ENCODE measurements at regions of chr20 and their contacts with region 1.

Region 1: DNA sequence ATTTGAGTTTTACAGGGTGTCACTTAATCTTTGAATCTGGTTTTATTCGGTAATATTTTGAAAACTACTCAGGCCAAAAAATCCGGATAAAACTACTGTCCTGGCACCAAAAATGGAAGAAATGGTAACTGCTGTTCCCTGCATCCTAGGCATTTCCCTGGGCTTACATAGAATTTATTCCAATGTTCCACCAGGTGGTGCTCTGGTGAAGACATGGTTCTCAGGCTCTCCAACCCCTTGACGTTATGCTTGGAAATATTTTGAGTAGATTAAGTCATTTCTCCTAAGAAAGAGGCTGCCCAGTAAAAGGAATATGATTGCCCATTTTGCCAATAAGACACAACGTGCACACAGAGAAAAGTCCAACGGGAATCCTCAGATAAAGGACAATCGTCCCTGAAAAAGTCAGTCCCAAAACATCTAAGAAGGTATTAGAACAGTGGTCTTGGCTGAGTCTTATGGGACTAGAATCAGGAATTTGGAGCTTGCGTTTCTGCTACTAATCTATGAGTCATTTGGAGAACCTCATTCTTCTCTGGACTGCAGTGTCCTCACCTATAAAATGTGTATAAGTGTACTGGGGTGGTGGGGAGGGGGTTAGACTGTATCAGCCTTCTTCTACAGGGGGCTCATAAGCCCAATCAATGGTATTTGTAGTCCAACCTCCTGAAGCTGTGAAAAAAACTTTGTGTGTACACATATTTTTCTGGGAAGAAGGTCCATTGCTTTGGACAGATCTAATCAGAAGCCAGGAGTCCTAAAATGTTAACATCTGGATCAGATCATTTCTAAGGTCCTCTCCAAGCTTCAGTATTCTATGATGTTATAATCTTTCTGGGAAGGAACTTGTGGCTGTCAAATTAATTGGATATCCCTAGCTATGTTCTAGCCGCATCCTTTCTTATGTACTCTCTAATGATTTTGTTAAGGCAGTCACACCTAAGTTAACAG is 131.0 kb upstream of the BMP2 start:
- DNase-seq: no peak
- ATAC-seq: peak; percentile 73
- H3K4me3 ChIP-seq: no peak overlapping the region
- H3K27ac ChIP-seq: no peak overlapping the region
- H3K4me1 ChIP-seq: no peaks in the 10 kb centered on the region
- H3K27me3 ChIP-seq: no peaks in the 10 kb centered on the region
- CTCF ChIP-seq: peak; percentile 24 to 54 (median 25); a peak in 3 of 6 replicates
- EP300 ChIP-seq: no peak
- POLR2A ChIP-seq: no peak
- RAD21 ChIP-seq: peak; percentile 36

Region 2: DNA sequence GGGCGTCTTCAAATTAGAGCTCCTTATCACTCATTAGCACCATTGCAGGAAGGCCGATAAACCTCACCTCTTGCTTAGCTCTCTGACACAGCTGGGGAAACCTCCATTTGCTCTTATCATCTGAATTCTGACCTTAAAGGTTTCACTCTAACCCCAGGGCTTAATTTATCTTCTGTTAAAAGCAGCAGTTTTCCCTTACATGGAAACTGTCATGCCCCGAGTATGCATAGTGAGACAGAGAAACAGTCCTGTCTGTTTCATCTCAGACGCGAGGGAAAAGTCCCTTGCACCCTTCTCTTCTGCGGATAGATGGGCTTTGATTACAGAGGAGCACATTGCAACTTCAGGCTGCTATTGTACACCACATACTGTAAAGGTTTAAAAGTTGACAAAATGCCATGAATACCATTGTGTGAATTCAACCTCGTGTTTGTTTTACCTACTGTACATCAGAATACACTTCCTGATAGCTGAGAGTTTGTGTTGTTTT is 60.5 kb before region 1 on chr20:
- CTCF ChIA-PET with region 1: interaction called, 4 read pairs
- POLR2A ChIA-PET with region 1: no interaction called
- RAD21 ChIA-PET with region 1: interaction called, 5 read pairs
- SMC1A ChIA-PET with region 1: interaction called, 109 read pairs
- in situ Hi-C with region 1: no loop called
- intact Hi-C with region 1: no loop called
- DNase-seq: peak; percentile 53
- ATAC-seq: peak; percentile 90
- H3K4me3 ChIP-seq: no peak overlapping the region
- H3K27ac ChIP-seq: no peak overlapping the region
- H3K4me1 ChIP-seq: no peaks in the 10 kb centered on the region
- H3K27me3 ChIP-seq: no peaks in the 10 kb centered on the region
- CTCF ChIP-seq: no peak
- EP300 ChIP-seq: peak; percentile 81 to 83; a peak in 3 of 4 replicates
- POLR2A ChIP-seq: no peak
- RAD21 ChIP-seq: no peak

Region 3: DNA sequence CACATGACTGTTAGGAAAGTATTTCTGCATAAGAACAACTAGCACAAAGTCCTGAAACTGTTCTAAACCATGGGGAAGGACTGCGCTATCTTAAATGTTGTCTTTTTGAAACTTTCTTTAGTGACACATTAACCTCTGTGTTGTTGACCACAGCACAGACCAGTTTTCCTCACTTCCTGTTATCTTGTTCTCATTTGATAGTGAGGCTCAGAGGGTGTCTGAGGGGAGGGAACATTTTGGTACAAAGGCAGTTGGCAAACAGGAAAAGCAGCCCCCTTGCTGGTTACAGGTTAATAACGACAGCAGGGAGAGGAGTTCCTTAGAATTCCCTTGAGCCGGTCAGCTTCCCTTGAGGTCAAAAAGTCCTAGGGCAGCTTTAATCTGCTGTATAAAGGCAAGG is 12.5 kb before region 1 on chr20:
- CTCF ChIA-PET with region 1: interaction called, 33 read pairs
- POLR2A ChIA-PET with region 1: interaction called, 6 read pairs
- RAD21 ChIA-PET with region 1: interaction called, 11 read pairs
- SMC1A ChIA-PET with region 1: interaction called, 36 read pairs
- in situ Hi-C with region 1: no loop called
- intact Hi-C with region 1: no loop called
- DNase-seq: peak; percentile 66
- ATAC-seq: peak; percentile 96
- H3K4me3 ChIP-seq: no peak overlapping the region
- H3K27ac ChIP-seq: no peak overlapping the region
- H3K4me1 ChIP-seq: no peaks in the 10 kb centered on the region
- H3K27me3 ChIP-seq: no peaks in the 10 kb centered on the region
- CTCF ChIP-seq: no peak
- EP300 ChIP-seq: peak in 1 of 2 experiments; percentile 90; a peak in 3 of 4 replicates
- POLR2A ChIP-seq: no peak
- RAD21 ChIP-seq: no peak

Region 4: GRCh38 chr20:6663104-6663503 is 26.6 kb after region 1 on chr20:
- CTCF ChIA-PET with region 1: interaction called, 4 read pairs
- POLR2A ChIA-PET with region 1: no interaction called
- RAD21 ChIA-PET with region 1: interaction called, 3 read pairs
- SMC1A ChIA-PET with region 1: interaction called, 10 read pairs
- in situ Hi-C with region 1: no loop called
- intact Hi-C with region 1: no loop called
- DNase-seq: no peak
- ATAC-seq: peak; percentile 72
- H3K4me3 ChIP-seq: no peak overlapping the region
- H3K27ac ChIP-seq: no peak overlapping the region
- H3K4me1 ChIP-seq: no peaks in the 10 kb centered on the region
- H3K27me3 ChIP-seq: no peaks in the 10 kb centered on the region
- CTCF ChIP-seq: no peak
- EP300 ChIP-seq: no peak; a peak in 1 of 4 replicates
- POLR2A ChIP-seq: no peak
- RAD21 ChIP-seq: no peak

Region 5: DNA sequence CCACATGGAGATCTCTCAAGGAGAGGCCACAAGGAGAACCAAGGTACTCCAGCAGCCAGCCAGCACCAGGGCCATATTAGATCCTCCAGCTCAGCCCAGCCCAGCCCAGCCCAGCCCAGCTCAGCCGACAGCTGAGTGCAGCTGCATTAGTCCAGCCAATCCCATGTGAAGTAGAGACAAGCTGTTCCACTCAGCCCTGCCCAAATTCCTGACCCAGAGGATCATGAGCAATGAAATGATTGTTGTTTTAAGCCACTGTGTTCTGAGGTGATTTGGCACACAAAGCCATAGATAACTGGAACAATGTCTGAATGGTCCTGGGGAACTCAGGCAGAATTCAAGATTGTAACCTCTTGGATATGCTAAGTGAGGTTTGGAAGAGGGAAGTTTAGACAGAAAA is 71.5 kb after region 1 on chr20:
- CTCF ChIA-PET with region 1: interaction called, 7 read pairs
- POLR2A ChIA-PET with region 1: no interaction called
- RAD21 ChIA-PET with region 1: interaction called, 6 read pairs
- SMC1A ChIA-PET with region 1: interaction called, 10 read pairs
- in situ Hi-C with region 1: no loop called
- intact Hi-C with region 1: no loop called
- DNase-seq: no peak
- ATAC-seq: peak; percentile 8; the same call in 2 of the 3 replicates
- H3K4me3 ChIP-seq: no peak overlapping the region
- H3K27ac ChIP-seq: no peak overlapping the region
- H3K4me1 ChIP-seq: no peaks in the 10 kb centered on the region
- H3K27me3 ChIP-seq: no peaks in the 10 kb centered on the region
- CTCF ChIP-seq: no peak
- EP300 ChIP-seq: no peak
- POLR2A ChIP-seq: no peak
- RAD21 ChIP-seq: no peak